ENCODE measurements at regions of chr7 and their contacts with region 1.

Region 1: GRCh38 chr7:42690794-42691639 is 220.9 kb downstream of the C7orf25 start:
- DNase-seq: peak; percentile 19 to 20
- H3K4me3 ChIP-seq: no peak overlapping the region
- H3K27ac ChIP-seq: no peak overlapping the region
- H3K4me1 ChIP-seq: no peaks in the 10 kb centered on the region
- H3K27me3 ChIP-seq: no peaks in the 10 kb centered on the region
- CTCF ChIP-seq: peak in 3 of 6 experiments; percentile 43 to 44 (median 43)
- POLR2A ChIP-seq: no peak

Region 2: DNA sequence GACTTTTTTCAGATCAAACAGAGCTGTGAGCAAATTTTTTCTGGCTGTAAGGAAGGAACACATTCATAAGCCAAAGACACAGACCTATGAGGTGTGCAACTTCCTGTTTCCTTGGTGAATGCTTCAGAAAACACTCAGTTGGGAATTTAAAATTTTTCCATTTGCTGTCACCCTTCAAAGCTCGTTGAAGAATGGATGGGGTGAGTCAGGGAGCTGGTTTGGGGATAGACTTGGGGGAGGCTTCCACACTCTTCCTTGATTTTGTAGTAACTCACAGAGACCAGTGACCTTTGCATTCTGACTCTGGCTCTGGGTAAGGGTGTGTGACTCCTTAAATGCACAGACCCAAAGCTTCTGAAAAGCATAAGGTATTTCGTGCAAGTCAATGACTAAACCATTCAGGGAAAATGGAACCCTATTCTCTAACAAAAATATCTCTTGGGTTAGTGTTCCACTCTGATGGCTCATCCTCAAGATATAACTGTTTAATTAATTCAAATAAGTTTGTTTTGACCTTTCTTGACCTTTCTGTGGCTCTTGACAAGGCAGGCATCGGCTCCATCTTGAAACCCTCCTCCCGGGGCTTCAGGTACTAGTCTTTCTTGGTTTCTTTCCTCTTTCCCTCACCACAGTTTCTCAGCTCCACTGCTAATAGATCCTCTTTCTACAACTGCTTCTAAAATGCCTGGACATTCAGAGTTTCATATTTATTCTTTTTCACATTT is 760.3 kb before region 1 on chr7:
- intact Hi-C with region 1: loop called (anchors 10 kb)
- DNase-seq: no peak
- H3K4me3 ChIP-seq: no peak overlapping the region
- H3K27ac ChIP-seq: no peak overlapping the region
- H3K4me1 ChIP-seq: no peaks in the 10 kb centered on the region
- H3K27me3 ChIP-seq: no peaks in the 10 kb centered on the region
- CTCF ChIP-seq: no peak
- POLR2A ChIP-seq: no peak

Region 3: GRCh38 chr7:42856607-42856994 is 165.6 kb after region 1 on chr7:
- intact Hi-C with region 1: no loop called
- DNase-seq: no peak
- H3K4me3 ChIP-seq: peak overlapping the region in 2 of 3 donors; percentile 12 to 26
- H3K27ac ChIP-seq: no peak overlapping the region
- H3K4me1 ChIP-seq: peaks cover 0 to 6% of the 10 kb centered on the region in 2 donors
- H3K27me3 ChIP-seq: no peaks in the 10 kb centered on the region
- CTCF ChIP-seq: no peak
- POLR2A ChIP-seq: no peak